Gastrocnemius medialis (tissue), 4 donors: ENCODE measurements at regions of chr15 and their contacts with region 1.

Region 1: DNA sequence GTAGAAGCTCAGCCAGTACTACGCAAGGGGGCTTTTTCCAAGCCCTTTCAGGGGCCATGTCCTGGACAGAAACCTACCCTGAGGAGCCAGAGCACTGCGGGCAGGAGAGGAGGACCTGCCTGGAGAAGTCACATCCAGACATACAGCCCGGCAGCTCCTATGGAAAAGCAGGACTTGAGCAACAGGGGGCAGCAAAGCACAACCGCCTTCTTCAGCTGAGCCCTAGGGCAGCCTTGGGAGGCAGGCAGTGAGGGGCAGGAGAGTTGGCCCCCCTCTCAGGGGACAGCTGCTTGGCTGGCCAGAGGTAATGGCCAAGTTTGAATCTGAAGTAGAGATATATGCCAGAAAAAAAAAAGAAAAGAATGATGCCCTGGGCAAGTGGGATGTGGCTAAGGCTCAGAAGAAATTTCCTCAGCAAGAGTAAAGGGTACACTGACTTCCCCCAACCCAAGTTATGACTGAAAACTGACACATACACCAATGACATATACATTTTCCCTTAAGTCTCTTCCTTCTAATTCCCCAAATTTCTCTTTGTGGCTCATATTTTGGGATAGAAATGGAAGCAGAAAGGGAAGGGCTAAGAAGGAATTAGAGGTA is 56.9 kb downstream of the CYP19A1 start:
- DNase-seq: peak; percentile 12 to 23
- ATAC-seq: peak; percentile 12 to 46
- H3K4me3 ChIP-seq: no peak overlapping the region
- H3K27ac ChIP-seq: no peak overlapping the region
- H3K4me1 ChIP-seq: no peaks in the 10 kb centered on the region
- H3K27me3 ChIP-seq: no peaks in the 10 kb centered on the region
- CTCF ChIP-seq: peak; percentile 17 to 60 (median 47)
- POLR2A ChIP-seq: no peak

Region 2: GRCh38 chr15:51185213-51186159 is 96.0 kb before region 1 on chr15:
- in situ Hi-C with region 1: no loop called
- intact Hi-C with region 1: no loop called
- DNase-seq: no peak
- ATAC-seq: no peak
- H3K4me3 ChIP-seq: no peak overlapping the region
- H3K27ac ChIP-seq: no peak overlapping the region
- H3K4me1 ChIP-seq: peaks cover 11 to 19% of the 10 kb centered on the region in 2 donors
- H3K27me3 ChIP-seq: no peaks in the 10 kb centered on the region
- CTCF ChIP-seq: no peak
- POLR2A ChIP-seq: no peak

Region 3: DNA sequence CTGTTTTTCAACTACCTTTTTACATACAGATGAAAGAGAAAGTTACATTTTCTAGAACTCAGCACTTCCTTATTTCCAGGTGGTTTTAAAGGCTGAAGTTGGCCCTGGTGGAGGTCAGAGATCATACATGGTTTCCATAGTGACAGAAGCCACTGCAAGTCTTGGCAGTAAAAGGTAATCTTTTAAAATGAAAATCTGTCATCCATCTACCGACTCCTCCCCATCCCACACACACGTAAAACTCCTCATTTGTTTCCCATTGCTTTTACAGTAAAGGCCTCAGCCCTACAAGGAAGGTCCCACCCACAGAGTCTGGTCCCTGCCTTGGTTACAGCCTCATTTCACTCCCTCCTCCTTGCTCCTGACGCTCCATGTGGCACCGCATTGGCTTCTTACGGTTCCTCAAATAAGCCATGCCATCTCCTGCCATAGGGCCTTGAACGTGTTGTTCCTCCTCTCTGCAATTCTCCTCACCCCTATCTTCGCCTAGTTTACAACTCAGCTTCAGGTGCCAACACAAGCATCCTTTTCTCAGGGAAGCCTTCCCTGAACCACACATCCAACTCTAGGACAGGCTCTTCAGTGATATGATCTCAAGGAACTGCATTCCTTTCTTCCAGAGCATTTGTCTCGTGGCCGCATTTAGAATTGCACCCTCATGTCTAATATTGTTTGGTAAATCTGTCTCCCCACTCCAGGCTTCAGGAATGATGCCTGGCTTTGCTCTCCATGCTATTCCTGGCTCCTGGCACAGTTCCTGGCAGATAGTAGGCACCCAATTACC is 54.3 kb after region 1 on chr15:
- in situ Hi-C with region 1: no loop called
- intact Hi-C with region 1: loop called (anchors 10 kb)
- DNase-seq: no peak
- ATAC-seq: no peak
- H3K4me3 ChIP-seq: no peak overlapping the region
- H3K27ac ChIP-seq: no peak overlapping the region
- H3K4me1 ChIP-seq: peaks cover 0 to 5% of the 10 kb centered on the region in 2 donors
- H3K27me3 ChIP-seq: no peaks in the 10 kb centered on the region
- CTCF ChIP-seq: no peak
- POLR2A ChIP-seq: no peak

Region 4: GRCh38 chr15:51405693-51406523 is 124.4 kb after region 1 on chr15:
- in situ Hi-C with region 1: no loop called
- intact Hi-C with region 1: no loop called
- DNase-seq: no peak
- ATAC-seq: no peak
- H3K4me3 ChIP-seq: no peak overlapping the region
- H3K27ac ChIP-seq: no peak overlapping the region
- H3K4me1 ChIP-seq: no peaks in the 10 kb centered on the region
- H3K27me3 ChIP-seq: no peaks in the 10 kb centered on the region
- CTCF ChIP-seq: no peak
- POLR2A ChIP-seq: no peak

Region 5: DNA sequence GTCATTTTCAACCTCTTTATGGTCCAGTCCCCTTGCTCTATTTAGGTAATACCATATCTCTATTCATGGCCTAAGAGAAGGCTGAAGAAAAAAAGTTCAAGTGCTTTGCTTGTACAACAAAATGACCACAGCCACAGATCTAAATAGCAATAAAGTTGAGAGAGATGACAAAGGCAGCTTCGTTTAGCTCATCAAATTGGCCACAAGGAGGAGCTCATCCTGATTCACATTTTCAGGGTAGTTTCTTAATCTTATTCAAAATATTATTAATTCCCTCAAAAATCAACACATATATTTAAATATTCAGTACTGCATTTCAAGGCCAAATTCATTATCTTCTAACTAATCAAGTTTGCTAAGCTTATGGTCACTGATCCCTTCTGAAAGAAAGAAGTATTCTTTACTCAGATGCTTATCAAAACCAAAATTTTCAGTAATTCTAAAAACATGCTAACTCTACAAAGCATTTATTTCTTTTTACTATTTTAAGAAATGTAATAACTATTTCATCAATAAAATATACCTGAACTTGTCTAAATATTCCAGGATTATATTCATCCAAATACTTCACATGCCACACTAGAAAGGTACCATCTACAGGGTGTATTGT is 255.6 kb after region 1 on chr15:
- in situ Hi-C with region 1: no loop called
- intact Hi-C with region 1: no loop called
- DNase-seq: no peak
- ATAC-seq: no peak
- H3K4me3 ChIP-seq: no peak overlapping the region
- H3K27ac ChIP-seq: no peak overlapping the region
- H3K4me1 ChIP-seq: no peaks in the 10 kb centered on the region
- H3K27me3 ChIP-seq: no peaks in the 10 kb centered on the region
- CTCF ChIP-seq: peak in 1 of 5 experiments; percentile 20
- POLR2A ChIP-seq: no peak

Region 6: DNA sequence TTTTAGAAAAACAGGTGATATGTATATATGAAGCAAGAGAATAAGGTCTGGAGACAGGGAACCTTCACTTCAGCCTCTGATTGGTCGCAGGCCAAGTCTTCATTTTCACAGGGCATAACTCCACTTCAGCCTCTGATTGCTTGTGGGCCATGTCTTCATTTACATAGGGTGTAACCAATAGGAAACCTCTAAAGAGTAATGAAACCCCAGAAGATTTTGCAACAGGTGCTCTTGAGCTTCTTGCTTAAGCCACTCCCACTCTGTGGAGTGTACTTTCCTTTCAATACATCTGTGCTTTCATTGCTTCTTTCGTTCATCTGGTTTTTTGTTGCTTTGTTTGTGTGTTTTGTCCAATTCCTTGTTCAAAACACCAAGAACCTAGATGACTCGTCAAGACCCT is 377.2 kb after region 1 on chr15:
- in situ Hi-C with region 1: no loop called
- intact Hi-C with region 1: no loop called
- DNase-seq: no peak
- ATAC-seq: no peak
- H3K4me3 ChIP-seq: no peak overlapping the region
- H3K27ac ChIP-seq: no peak overlapping the region
- H3K4me1 ChIP-seq: no peaks in the 10 kb centered on the region
- H3K27me3 ChIP-seq: no peaks in the 10 kb centered on the region
- CTCF ChIP-seq: no peak
- POLR2A ChIP-seq: no peak